ENCODE measurements at regions of chr12 and their contacts with region 1.

Region 1: GRCh38 chr12:54439521-54440255 is 20.6 kb upstream of the ITGA5 start:
- DNase-seq: peak; percentile 69
- H3K27ac ChIP-seq: no peak overlapping the region
- CTCF ChIP-seq: peak; percentile 75

Region 2: DNA sequence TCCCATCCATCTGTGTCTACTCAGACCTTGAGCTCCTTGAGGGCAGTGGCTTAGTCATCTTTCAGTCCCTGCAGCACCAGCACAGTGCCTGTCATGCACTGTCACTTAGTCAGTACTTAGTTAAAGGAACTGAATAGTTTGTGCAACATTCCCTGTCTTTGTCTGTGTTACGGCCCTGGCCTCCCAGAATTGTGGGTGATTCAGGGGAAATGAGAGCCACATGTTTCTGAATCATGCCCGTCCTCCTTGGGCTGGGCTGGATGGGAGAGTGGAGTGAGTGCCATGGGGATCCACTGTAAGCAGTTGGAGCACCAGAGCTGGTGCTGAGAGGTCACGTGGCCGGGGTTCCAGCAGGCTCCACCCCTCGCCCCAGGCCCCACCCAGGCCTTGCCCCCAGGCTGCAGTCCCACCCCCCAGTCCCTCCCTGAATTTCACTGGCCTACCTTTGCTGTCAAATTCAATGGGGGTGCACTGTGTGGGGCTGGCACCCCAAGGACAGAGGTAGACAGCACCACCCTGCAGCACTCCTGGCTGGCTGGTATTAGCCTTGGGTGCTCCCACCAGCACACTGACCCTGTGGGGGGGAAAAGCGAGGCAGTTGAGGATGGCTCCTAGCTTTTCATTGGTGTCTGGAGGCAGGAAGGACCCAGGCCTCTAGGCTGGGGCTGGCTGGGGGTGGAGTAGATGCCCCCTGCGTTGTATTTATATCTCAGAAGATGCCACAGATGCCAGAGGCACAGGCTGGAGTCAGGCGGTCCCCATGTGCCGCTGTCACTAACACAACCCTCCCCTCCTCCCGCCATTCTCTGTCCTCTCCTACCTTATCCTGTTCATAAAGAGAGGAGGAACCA is 28.1 kb before region 1 on chr12:
- CTCF ChIA-PET with region 1: interaction called, 15 read pairs
- POLR2A ChIA-PET with region 1: no interaction called
- DNase-seq: peak; percentile 91
- H3K27ac ChIP-seq: peak overlapping the region; percentile 89
- CTCF ChIP-seq: no peak

Region 3: DNA sequence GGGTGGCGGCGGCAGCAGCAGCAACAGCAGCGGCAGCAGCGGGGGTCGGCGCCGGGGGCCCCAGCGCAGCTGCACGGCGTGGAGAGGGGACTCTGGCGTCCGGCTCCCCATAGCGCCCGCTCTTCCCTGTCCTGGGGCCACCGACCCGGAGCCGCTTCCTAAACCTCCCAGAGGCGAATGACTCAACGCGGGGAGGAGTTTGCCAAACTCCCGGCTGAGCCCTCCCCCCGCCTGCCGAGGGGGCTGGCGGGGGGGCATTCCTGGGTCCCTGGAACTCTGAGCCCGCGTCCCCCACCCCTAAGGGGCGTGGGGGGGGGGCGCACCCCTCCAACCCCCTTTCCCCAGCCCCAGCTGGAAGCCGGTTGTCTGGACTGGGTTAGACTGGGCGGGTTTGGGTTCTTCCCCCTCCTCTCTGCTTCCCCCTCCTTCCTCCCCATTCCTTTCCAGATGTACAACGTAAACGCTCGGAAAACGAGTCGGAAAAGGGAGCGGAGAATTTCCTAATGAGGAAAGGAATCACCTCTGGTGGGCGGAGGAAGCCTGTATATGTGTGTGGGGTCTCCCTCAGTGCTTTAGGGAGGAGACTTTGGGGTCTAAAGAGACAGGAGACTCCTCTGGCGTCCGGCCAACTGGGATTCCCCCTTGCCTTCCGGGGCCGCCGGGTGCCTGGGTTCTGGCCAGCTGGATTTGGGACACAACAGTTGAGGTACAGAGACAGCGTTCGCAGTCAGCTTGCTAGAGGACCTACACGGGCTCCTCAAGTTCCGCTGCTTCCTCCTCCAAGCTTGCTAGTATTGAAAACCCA is 20.4 kb before region 1 on chr12 and contains the start of gene ITGA5:
- CTCF ChIA-PET with region 1: interaction called, 15 read pairs
- POLR2A ChIA-PET with region 1: no interaction called
- DNase-seq: peak; percentile 93
- H3K27ac ChIP-seq: peak within 1 kb of the TSS; percentile 94
- CTCF ChIP-seq: no peak

Measured in RWPE1 (cell line).